IMR-90 (cell line): ENCODE measurements at regions of chr2 and their contacts with region 1.

Region 1: GRCh38 chr2:207166039-207166348 is 246 bp upstream of the KLF7 start:
- DNase-seq: peak; percentile 100
- ATAC-seq: peak; percentile 86
- H3K4me3 ChIP-seq: peak overlapping the region; percentile 64
- H3K27ac ChIP-seq: no peak overlapping the region
- H3K4me1 ChIP-seq: peaks cover 7% of the 10 kb centered on the region
- H3K27me3 ChIP-seq: no peaks in the 10 kb centered on the region
- CTCF ChIP-seq: no peak
- POLR2A ChIP-seq: no peak
- RAD21 ChIP-seq: no peak

Region 2: GRCh38 chr2:206920310-206920709 is 245.7 kb before region 1 on chr2:
- CTCF ChIA-PET with region 1: no interaction called
- POLR2A ChIA-PET with region 1: interaction called, 14 read pairs
- dilution Hi-C with region 1: no loop called
- in situ Hi-C with region 1: no loop called
- intact Hi-C with region 1: no loop called
- DNase-seq: no peak
- ATAC-seq: no peak
- H3K4me3 ChIP-seq: no peak overlapping the region
- H3K27ac ChIP-seq: no peak overlapping the region
- H3K4me1 ChIP-seq: no peaks in the 10 kb centered on the region
- H3K27me3 ChIP-seq: no peaks in the 10 kb centered on the region
- CTCF ChIP-seq: no peak
- POLR2A ChIP-seq: no peak
- RAD21 ChIP-seq: no peak

Region 3: DNA sequence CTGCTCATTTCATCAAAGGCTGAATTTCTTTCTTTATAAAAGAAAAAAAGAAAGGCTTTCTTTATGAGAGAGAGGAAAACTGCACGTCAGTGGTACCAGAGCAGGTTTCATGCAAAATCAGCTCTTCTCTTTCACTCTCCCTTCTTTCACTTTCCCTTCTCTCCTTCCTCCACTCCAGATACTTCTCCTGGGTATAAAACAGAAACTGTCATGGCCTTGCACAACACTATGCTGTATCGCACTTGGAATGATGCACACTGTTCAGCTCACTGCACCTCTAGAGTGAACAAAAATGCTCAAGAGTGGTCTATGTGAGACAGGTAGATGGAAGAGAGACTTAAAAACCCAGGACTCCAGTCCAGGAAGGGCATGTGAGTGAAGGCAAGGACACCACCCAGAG is 74.1 kb before region 1 on chr2:
- CTCF ChIA-PET with region 1: no interaction called
- POLR2A ChIA-PET with region 1: no interaction called
- dilution Hi-C with region 1: no loop called
- in situ Hi-C with region 1: no loop called
- intact Hi-C with region 1: no loop called
- DNase-seq: no peak
- ATAC-seq: no peak
- H3K4me3 ChIP-seq: no peak overlapping the region
- H3K27ac ChIP-seq: no peak overlapping the region
- H3K4me1 ChIP-seq: peaks cover 2% of the 10 kb centered on the region; the same call in 1 of the 2 replicates
- H3K27me3 ChIP-seq: no peaks in the 10 kb centered on the region
- CTCF ChIP-seq: no peak
- POLR2A ChIP-seq: no peak
- RAD21 ChIP-seq: no peak

Region 4: GRCh38 chr2:207121784-207122183 is 44.2 kb before region 1 on chr2:
- CTCF ChIA-PET with region 1: interaction called, 6 read pairs
- POLR2A ChIA-PET with region 1: no interaction called
- dilution Hi-C with region 1: no loop called
- in situ Hi-C with region 1: no loop called
- intact Hi-C with region 1: loop called (anchors 2 kb)
- DNase-seq: peak; percentile 85
- ATAC-seq: peak; percentile 81
- H3K4me3 ChIP-seq: no peak overlapping the region
- H3K27ac ChIP-seq: peak overlapping the region; percentile 21; the same call in 1 of the 2 replicates
- H3K4me1 ChIP-seq: peaks cover 26% of the 10 kb centered on the region
- H3K27me3 ChIP-seq: no peaks in the 10 kb centered on the region
- CTCF ChIP-seq: no peak
- POLR2A ChIP-seq: no peak
- RAD21 ChIP-seq: no peak

Region 5: DNA sequence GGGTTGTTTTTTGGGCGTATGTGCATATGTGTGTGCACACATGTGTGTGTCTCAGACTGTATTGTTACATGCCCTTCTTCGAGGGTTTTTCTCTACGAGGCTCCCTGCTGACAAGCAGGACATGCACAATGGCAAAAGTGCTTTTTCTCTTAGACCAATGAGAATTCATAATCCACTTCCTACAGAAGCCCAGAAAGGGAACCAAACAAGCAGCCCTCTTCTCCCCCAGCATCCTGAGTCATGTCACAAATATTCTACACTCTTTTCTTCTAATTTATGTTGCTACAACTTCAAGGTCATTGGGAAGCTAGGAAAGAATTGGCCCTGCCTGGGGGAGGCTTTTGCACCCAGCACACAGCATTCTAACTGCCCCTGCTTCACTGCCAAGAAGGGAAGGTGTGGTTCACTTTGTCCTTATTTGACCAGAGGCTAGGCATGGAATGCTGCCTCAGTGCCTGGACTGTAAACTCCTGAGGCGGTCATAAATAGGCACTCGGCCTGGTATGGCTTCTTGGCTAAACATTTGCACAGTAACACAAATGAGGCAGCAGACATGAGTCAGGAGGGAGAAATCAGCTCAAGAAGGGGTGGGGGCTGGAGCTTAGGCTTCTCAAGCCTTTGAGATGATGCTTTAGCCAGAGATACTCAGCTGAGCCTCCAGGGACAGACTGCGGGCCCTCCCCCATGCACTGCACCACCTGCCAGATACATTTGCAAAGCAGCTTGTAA is 92.4 kb after region 1 on chr2:
- CTCF ChIA-PET with region 1: interaction called, 4 read pairs
- POLR2A ChIA-PET with region 1: interaction called, 153 read pairs
- dilution Hi-C with region 1: no loop called
- in situ Hi-C with region 1: no loop called
- intact Hi-C with region 1: loop called (anchors 1 kb)
- DNase-seq: peak; percentile 100
- ATAC-seq: peak; percentile 76
- H3K4me3 ChIP-seq: no peak overlapping the region
- H3K27ac ChIP-seq: peak overlapping the region; percentile 99
- H3K4me1 ChIP-seq: peaks cover 56% of the 10 kb centered on the region
- H3K27me3 ChIP-seq: no peaks in the 10 kb centered on the region
- CTCF ChIP-seq: peak; percentile 14; the same call in 1 of the 2 replicates
- POLR2A ChIP-seq: peak; percentile 40
- RAD21 ChIP-seq: peak; percentile 45

Region 6: DNA sequence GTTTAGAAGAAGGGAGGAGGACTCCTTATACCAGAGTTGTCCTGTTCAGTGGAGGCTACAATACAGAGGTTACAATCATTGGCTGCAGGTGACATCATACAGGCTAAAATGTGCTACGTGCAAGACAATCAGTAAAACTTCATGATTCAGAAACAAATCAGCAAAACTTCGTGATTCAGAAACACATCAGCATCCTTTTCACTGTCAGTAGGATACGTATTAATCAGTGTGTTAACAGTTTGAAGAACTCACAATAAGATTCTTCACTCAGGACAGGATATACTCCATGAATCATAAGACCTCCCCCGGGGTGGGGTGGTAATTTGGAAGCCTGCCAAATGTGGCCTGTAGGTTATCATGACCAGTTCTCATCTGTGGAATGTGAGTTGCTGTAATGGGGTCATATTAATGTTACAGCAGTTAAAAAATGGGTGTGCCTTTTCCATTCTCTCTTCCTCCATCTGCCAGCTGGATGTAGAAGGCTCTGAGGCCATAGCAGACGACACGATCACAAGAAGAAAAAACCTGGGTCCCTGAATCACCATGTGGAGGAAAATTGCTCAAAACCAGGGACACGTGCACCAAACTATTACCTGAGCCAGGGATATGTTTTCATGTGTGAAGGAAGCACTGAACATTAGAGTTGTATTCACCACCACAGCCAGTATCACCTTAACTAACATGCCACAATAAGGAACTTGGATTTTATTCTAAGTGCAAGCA is 229.0 kb after region 1 on chr2:
- CTCF ChIA-PET with region 1: no interaction called
- POLR2A ChIA-PET with region 1: interaction called, 3 read pairs
- dilution Hi-C with region 1: no loop called
- in situ Hi-C with region 1: no loop called
- intact Hi-C with region 1: loop called (anchors 2 kb)
- DNase-seq: peak; percentile 99
- ATAC-seq: peak; percentile 90
- H3K4me3 ChIP-seq: no peak overlapping the region
- H3K27ac ChIP-seq: peak overlapping the region; percentile 98
- H3K4me1 ChIP-seq: peaks cover 10% of the 10 kb centered on the region
- H3K27me3 ChIP-seq: no peaks in the 10 kb centered on the region
- CTCF ChIP-seq: no peak
- POLR2A ChIP-seq: no peak
- RAD21 ChIP-seq: peak; percentile 3

Region 7: DNA sequence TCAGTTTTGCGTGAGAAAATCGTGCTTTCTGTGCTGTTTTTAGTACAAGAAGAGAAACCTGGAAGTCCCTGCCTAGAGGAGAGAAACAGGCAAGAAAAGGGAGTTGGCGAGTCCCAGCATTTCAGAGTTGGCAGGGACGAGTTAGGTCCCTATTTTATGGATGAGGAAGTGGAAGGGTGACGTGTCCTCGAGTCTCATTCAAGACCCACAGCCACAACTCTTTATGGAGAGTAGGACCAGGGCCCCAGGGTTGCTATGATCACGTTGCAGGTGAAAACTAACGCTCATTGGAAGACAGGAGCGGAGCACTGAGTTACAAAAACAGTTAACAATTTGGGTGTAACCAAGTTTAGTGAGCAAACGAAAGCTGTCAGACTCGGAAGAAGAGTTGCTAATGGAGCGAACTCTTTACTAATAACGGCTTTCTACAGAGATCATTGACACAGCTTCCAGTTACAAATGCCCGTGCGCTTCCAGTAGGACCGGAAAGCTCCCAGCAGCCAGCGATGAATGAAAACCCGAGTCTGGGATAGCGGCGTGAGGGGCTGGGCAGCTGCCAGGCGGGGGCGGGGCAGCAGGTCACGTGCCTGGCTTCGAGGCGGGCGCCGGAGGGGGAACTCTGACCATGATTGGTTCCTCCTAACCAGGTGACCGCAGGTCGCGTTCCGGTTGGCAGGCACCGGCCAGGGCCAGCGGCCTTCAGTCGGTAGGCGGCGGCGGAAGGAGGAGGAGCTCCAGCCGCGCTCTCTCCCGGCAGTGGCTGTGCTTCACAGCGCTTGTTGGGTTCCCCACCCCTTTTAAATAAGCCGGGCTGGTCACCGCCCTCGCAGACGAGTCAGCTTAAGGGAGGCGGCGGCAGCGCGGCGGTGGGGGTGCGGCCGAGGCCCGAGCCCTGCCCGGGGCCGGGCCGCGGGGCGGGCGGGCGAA is 545.1 kb after region 1 on chr2 and contains the start of gene CCNYL1:
- CTCF ChIA-PET with region 1: no interaction called
- POLR2A ChIA-PET with region 1: no interaction called
- dilution Hi-C with region 1: no loop called
- in situ Hi-C with region 1: loop called (anchors 25 kb)
- intact Hi-C with region 1: no loop called
- DNase-seq: peak; percentile 99
- ATAC-seq: peak; percentile 98
- H3K4me3 ChIP-seq: peak within 1 kb of the TSS; percentile 87
- H3K27ac ChIP-seq: peak within 1 kb of the TSS; percentile 75
- H3K4me1 ChIP-seq: no peaks in the 10 kb centered on the region
- H3K27me3 ChIP-seq: no peaks in the 10 kb centered on the region
- CTCF ChIP-seq: 0 out of 2 replicates have a peak, but pooled peaks have one; percentile 10
- POLR2A ChIP-seq: peak; percentile 90
- RAD21 ChIP-seq: no peak
- total RNA-seq, gene CCNYL1: 5.4 and 6.7 TPM in 2 replicates